Right cardiac atrium (tissue), 5 donors: ENCODE measurements at regions of chr16 and their contacts with region 1.

Region 1: DNA sequence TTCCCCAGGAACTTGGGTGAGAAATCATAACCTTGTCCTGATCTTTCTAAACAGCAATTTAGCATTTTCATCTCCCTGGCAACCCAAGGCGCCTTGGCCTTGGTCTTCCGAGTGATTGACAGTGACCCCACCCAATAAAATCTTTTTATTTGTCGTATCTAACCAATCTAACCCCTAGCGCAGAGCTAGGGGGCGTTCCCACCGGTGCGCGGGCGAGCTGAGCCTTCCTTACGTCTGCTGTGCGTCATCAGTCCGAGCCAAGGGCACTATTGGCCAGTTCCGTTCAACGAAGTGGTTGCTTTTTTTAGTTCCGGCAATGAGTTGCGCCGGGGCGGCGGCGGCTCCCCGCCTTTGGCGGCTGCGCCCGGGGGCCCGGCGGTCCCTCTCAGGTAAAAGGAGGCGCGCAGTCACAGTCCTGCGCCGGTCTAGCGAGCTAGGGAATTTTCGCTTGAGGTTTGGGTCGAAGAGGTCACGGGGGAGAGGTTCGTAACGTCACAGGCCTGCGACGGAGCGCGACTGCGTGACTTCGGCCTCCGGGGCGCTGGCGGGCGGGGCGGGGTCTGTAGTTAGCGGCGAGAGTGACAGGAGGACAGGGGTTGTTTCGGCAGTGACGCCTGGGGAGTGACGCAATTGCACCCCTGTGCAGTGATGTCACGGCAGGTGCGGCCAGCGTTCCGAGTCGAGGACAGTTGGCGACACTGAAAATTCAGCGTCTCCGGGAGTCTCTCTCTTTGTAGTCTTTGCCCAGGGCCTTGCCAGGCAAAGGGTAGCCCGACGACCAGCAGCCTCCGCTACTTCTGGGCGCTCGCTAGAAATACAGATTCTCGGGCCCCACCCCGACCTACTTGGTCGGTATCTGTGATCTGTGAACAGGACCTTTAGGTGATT is at the start of gene COQ7:
- DNase-seq: peak; percentile 99
- ATAC-seq: peak; percentile 98 to 99
- H3K4me3 ChIP-seq: peak within 1 kb of the TSS; percentile 65
- H3K27ac ChIP-seq: peak within 1 kb of the TSS; percentile 97
- H3K4me1 ChIP-seq: no peaks in the 10 kb centered on the region
- H3K27me3 ChIP-seq: no peaks in the 10 kb centered on the region
- total RNA-seq, gene COQ7: 32.1 to 36.5 (median 33.8) TPM

Region 2: GRCh38 chr16:18801197-18801972 is 266.2 kb before region 1 on chr16 and contains the start of gene ARL6IP1:
- intact Hi-C with region 1: loop called in 1 of 4 experiments (anchors 10 kb)
- DNase-seq: peak; percentile 100
- ATAC-seq: peak; percentile 99
- H3K4me3 ChIP-seq: peak within 1 kb of the TSS; percentile 67
- H3K27ac ChIP-seq: peak within 1 kb of the TSS; percentile 75
- H3K4me1 ChIP-seq: peaks cover 5% of the 10 kb centered on the region
- H3K27me3 ChIP-seq: no peaks in the 10 kb centered on the region
- total RNA-seq, gene ARL6IP1: 25.5 to 37.9 (median 26.9) TPM

Region 3: DNA sequence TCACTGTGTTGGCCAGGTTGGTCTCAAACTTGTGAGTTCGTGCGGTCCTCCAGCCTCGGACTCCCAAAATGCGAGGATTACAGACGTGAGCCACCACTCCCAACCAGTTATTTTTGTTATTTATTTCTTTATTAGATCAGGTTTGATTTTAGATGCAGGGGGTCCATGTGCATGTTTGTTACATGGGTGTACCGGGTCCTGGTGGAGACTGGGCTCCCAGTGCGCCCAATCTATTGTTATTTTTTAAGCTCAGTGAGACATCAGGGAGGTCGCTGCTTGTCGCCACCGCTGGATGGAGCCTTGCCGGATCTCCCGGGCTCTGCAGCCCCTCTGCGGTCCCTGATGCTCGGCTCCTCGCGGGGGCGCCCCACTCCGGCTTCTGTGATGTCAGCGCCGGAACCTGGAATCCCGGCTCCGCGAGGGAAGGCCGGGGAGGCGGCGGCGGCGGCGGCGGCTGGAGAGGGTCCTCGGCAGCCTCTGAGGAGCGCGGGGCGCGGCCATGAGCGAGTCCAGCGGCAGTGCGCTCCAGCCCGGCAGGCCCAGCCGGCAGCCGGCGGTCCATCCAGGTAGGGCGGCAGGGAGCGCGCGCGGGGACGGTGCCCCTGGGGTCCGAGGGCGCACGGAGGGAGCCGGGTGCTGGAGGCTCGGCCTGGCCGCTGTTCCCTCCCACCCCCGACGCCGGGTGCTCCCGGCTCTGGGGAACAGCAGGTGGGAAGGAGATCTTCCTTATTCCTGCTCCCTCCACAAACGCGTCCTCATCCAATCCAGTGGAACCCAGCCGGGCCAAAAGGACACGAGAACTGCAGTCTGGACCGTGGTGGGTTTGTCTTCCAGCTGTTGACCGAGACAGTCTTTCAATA is 83.8 kb before region 1 on chr16 and contains the start of gene TMC7:
- intact Hi-C with region 1: loop called in 1 of 4 experiments (anchors 5 kb)
- DNase-seq: peak; percentile 78 to 89 (median 88)
- ATAC-seq: peak; percentile 92 to 98
- H3K4me3 ChIP-seq: peak within 1 kb of the TSS; percentile 52
- H3K27ac ChIP-seq: peak within 1 kb of the TSS; percentile 1
- H3K4me1 ChIP-seq: peaks cover 2% of the 10 kb centered on the region
- H3K27me3 ChIP-seq: no peaks in the 10 kb centered on the region
- total RNA-seq, gene TMC7: 0.44 to 0.59 (median 0.58) TPM

Region 4: GRCh38 chr16:19153876-19154275 is 86.3 kb after region 1 on chr16:
- intact Hi-C with region 1: no loop called
- DNase-seq: no peak
- ATAC-seq: no peak
- H3K4me3 ChIP-seq: no peak overlapping the region
- H3K27ac ChIP-seq: no peak overlapping the region
- H3K4me1 ChIP-seq: no peaks in the 10 kb centered on the region
- H3K27me3 ChIP-seq: no peaks in the 10 kb centered on the region

Region 5: GRCh38 chr16:19210280-19210924 is 142.8 kb after region 1 on chr16:
- intact Hi-C with region 1: no loop called
- DNase-seq: no peak
- ATAC-seq: no peak
- H3K4me3 ChIP-seq: no peak overlapping the region
- H3K27ac ChIP-seq: no peak overlapping the region
- H3K4me1 ChIP-seq: no peaks in the 10 kb centered on the region
- H3K27me3 ChIP-seq: no peaks in the 10 kb centered on the region